BJ (cell line): ENCODE measurements at regions of chr6 and their contacts with region 1.

Region 1: DNA sequence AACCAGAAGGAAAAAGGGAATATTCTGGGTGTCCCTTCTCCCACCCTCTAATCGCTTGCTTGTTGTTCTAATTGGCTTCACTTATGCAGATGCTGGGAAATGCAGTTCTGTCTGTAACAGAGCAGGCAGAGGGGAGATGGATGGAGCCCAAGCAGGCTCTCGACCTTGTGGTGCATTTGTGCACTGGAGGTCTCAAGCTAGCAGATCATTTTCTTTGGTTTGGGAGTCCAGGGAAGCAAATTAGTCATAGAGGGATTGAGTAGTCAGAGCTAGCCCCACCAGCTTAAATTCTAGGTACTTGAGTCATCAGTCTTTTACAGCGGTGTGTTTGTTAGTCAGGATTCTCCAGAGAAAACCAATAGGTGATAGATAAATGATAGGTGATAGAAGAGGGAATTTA is 234.7 kb upstream of the ECI2 start:
- DNase-seq: peak; percentile 70
- H3K4me3 ChIP-seq: no peak overlapping the region
- H3K27me3 ChIP-seq: no peaks in the 10 kb centered on the region
- CTCF ChIP-seq: peak; percentile 14; the same call in 1 of the 2 replicates

Region 2: DNA sequence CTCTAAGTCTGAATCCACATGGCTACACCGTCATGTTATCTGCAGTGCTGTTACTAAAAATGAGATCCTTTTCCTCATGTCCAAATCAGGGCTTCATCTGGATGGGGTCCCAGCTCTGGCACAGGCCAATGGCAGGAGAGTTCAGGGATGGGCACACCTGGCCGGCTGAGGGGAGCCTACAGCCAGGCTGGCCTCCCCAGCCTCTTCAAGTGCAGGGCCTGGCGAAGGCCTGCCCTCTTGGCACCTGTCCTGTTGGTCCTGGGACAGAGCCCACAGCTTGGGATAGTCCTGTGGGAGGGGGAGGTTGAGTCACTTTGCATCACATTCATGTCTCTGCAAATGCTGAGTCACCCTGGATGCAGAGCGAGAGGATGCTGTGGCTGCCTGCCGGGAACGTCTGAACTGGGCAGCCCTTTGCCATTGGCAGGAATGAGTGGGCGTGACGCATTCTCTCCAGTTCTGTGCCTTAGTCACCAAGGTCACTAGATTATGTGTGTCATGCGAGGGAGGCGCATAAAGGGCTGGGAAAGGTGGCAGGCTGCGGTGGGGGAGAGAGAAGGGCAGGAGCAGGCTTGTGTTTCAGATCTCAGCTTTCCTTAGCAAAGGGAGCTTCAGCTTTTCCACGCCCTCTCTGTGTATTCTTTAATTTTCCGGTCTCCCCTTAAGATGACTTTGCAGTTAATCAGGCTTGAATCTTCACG is 11.5 kb before region 1 on chr6:
- CTCF ChIA-PET with region 1: interaction called, 12 read pairs
- POLR2A ChIA-PET with region 1: no interaction called
- DNase-seq: peak; percentile 98
- H3K4me3 ChIP-seq: no peak overlapping the region
- H3K27me3 ChIP-seq: no peaks in the 10 kb centered on the region
- CTCF ChIP-seq: no peak